Activated B cell treated with CpG ODN at 0.5 μM for 24 hours (primary cell): ENCODE measurements at regions of chr19 and their contacts with region 1.

Region 1: GRCh38 chr19:48618916-48619691 is at the starts of genes RPL18 and SPHK2:
- DNase-seq: peak; percentile 93
- ATAC-seq: peak; percentile 81
- H3K4me3 Mint-ChIP-seq: peak within 1 kb of the TSS; percentile 98
- H3K27ac Mint-ChIP-seq: peak within 1 kb of the TSS; percentile 97
- H3K4me1 Mint-ChIP-seq: peaks cover 56% of the 10 kb centered on the region
- H3K27me3 Mint-ChIP-seq: no peaks in the 10 kb centered on the region
- CTCF ChIP-seq: no peak
- total RNA-seq, gene RPL18: 2,427 and 2,762 TPM in 2 replicates
- total RNA-seq, gene SPHK2: 38.2 and 48.5 TPM in 2 replicates

Region 2: DNA sequence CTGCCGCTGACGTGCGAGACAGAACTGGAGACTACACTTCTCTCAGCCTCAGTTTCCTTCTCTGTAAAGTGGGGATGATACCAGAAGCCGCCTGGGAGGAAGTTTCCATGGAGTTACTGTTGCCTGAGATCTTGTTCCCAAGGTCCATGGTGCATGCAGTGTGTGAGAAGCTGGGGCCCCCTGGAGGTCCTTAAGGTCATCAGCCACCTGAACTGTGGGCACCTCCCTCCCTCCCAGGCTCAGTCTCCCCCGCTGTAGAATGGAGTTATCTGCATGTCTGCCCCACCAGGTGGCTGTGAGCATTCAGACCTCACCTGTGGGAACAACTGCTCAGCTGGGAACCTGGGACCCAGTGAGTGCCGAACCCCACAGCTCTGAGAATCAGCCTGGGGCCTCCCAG is 794.7 kb before region 1 on chr19:
- CTCF ChIA-PET with region 1: no interaction called
- POLR2A ChIA-PET with region 1: no interaction called
- intact Hi-C with region 1: no loop called
- DNase-seq: no peak
- ATAC-seq: no peak
- H3K4me3 Mint-ChIP-seq: no peak overlapping the region
- H3K27ac Mint-ChIP-seq: no peak overlapping the region
- H3K4me1 Mint-ChIP-seq: peaks cover 5% of the 10 kb centered on the region
- H3K27me3 Mint-ChIP-seq: peaks cover 23% of the 10 kb centered on the region
- CTCF ChIP-seq: no peak

Region 3: DNA sequence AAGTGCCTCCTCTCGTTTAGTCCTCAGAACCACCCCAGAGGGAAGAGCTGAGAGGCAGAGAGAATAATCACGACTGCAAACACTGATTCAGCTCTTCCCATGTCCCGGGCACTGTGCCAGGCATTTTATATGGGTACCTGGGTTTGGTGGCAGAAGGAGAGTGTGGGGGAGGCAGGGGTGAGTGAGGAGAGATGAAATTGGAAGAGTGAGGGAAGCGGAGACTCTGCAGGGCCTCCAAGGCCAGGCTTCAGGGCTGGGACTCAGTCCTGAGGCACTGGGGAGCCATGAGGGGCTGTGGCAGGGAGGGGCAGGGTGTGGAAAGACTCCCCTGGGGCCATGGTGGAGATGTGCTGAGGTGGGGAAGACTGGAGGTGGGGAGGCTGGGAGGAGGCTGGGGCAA is 246.2 kb before region 1 on chr19:
- CTCF ChIA-PET with region 1: no interaction called
- POLR2A ChIA-PET with region 1: no interaction called
- intact Hi-C with region 1: no loop called
- DNase-seq: no peak
- ATAC-seq: no peak
- H3K4me3 Mint-ChIP-seq: no peak overlapping the region
- H3K27ac Mint-ChIP-seq: no peak overlapping the region
- H3K4me1 Mint-ChIP-seq: no peaks in the 10 kb centered on the region
- H3K27me3 Mint-ChIP-seq: peaks cover 2% of the 10 kb centered on the region
- CTCF ChIP-seq: no peak

Region 4: GRCh38 chr19:48630296-48631063 is 11.4 kb after region 1 on chr19:
- CTCF ChIA-PET with region 1: interaction called, 6 read pairs
- POLR2A ChIA-PET with region 1: interaction called, 32 read pairs
- intact Hi-C with region 1: loop called (anchors 1 kb)
- DNase-seq: no peak
- ATAC-seq: no peak
- H3K4me3 Mint-ChIP-seq: no peak overlapping the region
- H3K27ac Mint-ChIP-seq: no peak overlapping the region
- H3K4me1 Mint-ChIP-seq: peaks cover 36% of the 10 kb centered on the region
- H3K27me3 Mint-ChIP-seq: no peaks in the 10 kb centered on the region
- CTCF ChIP-seq: no peak

Region 5: GRCh38 chr19:48720613-48721296 is 101.7 kb after region 1 on chr19:
- CTCF ChIA-PET with region 1: no interaction called
- POLR2A ChIA-PET with region 1: interaction called, 4 read pairs
- intact Hi-C with region 1: loop called (anchors 1 kb)
- DNase-seq: peak; percentile 81
- ATAC-seq: peak; percentile 86
- H3K4me3 Mint-ChIP-seq: peak overlapping the region; percentile 95
- H3K27ac Mint-ChIP-seq: peak overlapping the region; percentile 92
- H3K4me1 Mint-ChIP-seq: peaks cover 24% of the 10 kb centered on the region
- H3K27me3 Mint-ChIP-seq: no peaks in the 10 kb centered on the region
- CTCF ChIP-seq: no peak

Region 6: GRCh38 chr19:48858984-48859710 is 240.0 kb after region 1 on chr19:
- CTCF ChIA-PET with region 1: no interaction called
- POLR2A ChIA-PET with region 1: no interaction called
- intact Hi-C with region 1: no loop called
- DNase-seq: peak; percentile 66
- ATAC-seq: peak; percentile 84
- H3K4me3 Mint-ChIP-seq: peak overlapping the region; percentile 92
- H3K27ac Mint-ChIP-seq: peak overlapping the region; percentile 87
- H3K4me1 Mint-ChIP-seq: peaks cover 7% of the 10 kb centered on the region
- H3K27me3 Mint-ChIP-seq: no peaks in the 10 kb centered on the region
- CTCF ChIP-seq: no peak

Region 7: GRCh38 chr19:48913114-48913889 is 294.2 kb after region 1 on chr19:
- CTCF ChIA-PET with region 1: no interaction called
- POLR2A ChIA-PET with region 1: no interaction called
- intact Hi-C with region 1: no loop called
- DNase-seq: no peak
- ATAC-seq: peak; percentile 60
- H3K4me3 Mint-ChIP-seq: no peak overlapping the region
- H3K27ac Mint-ChIP-seq: no peak overlapping the region
- H3K4me1 Mint-ChIP-seq: peaks cover 17% of the 10 kb centered on the region
- H3K27me3 Mint-ChIP-seq: no peaks in the 10 kb centered on the region
- CTCF ChIP-seq: no peak